ENCODE measurements at regions of chr14 and their contacts with region 1.

Region 1: DNA sequence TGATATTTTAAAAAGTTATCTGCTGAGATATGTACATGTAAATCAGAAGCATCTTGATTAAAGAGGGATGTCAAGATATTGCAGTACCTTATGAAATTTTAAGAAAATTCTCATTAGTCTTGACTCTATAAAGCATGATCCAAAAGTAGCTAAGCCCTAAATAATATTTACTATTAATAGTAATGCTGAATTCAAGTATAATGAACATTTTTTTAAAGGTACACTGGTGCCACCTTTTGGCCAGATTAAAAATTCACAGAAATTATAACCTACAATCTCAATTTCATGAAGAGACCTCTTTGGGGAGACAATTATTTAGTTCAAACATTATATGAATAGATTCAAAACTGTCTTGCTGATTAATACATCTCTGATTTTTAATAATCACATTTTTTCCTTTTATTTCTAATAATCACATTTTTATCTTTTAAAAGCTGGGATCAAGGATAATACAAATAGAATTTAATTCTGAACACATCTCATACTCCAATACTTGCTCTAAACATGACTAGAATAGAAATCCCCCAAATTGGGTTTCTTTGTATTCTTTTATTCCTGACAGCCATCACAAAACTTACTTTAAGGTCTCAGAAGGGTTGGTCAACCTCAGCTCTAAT is 13.4 kb downstream of the AKAP5 start:
- DNase-seq: no peak

Region 2: GRCh38 chr14:64421166-64421565 is 57.6 kb before region 1 on chr14:
- intact Hi-C with region 1: loop called in 1 of 2 experiments (anchors 10 kb)
- DNase-seq: no peak